Vagina (tissue), 2 donors: ENCODE measurements at regions of chr5 and their contacts with region 1.

Region 1: GRCh38 chr5:140639148-140639979 is at the start of gene TMCO6:
- DNase-seq: peak in 1 of 2 donors; percentile 94
- H3K4me3 ChIP-seq: peak within 1 kb of the TSS; percentile 62 to 85
- H3K27ac ChIP-seq: peak within 1 kb of the TSS; percentile 88
- H3K4me1 ChIP-seq: peaks cover 26% of the 10 kb centered on the region
- H3K27me3 ChIP-seq: no peaks in the 10 kb centered on the region
- CTCF ChIP-seq: peak in 2 of 3 experiments; percentile 21 to 33
- POLR2A ChIP-seq: peak in 1 of 2 donors; percentile 36
- total RNA-seq, gene TMCO6: 16.5 TPM

Region 2: DNA sequence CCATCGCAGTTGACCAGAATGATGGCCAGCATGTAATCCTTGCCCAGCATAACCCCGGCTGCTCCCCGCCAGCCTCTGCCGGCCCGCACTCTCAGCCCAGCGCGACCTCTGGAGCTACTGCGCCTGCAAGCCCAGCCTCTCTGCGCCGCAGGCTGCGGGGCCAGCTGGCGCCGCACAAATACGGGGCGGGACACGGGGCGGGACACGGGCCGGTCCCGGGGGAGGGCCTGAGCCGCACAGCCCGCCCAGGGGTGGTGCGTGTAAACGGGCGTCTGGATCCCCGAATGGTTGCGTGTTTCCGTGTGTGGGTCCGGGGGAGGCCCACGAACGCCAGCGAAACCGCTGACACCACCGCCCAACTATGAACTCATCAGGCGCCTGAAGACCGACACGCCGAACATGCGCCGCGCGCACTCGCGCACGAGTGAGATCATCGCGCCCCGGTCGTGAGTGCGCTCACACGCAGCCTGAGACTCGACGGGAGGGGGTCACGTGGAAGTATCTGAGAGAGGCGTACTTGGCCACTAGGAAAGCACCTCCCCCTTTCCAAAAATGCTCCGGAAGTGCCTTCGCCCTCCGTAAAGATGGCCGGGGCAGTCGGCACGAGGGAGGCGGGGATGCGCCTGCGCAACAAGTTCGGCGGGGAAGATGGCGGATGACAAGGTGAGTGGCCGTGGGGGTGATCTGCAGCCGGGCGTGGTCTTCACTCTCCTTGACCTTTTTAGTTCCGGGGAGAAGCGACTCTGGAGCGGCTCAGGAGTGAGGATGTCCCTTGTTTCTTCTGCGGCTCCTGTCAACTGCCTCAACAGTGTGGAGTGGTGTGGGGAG is 75.0 kb before region 1 on chr5 and contains the starts of genes APBB3 and SLC35A4:
- intact Hi-C with region 1: loop called (anchors 10 kb)
- DNase-seq: peak in 1 of 2 donors; percentile 100
- H3K4me3 ChIP-seq: peak within 1 kb of the TSS; percentile 82 to 89
- H3K27ac ChIP-seq: peak within 1 kb of the TSS; percentile 94
- H3K4me1 ChIP-seq: peaks cover 55% of the 10 kb centered on the region
- H3K27me3 ChIP-seq: no peaks in the 10 kb centered on the region
- CTCF ChIP-seq: no peak
- POLR2A ChIP-seq: peak in 1 of 2 donors; percentile 67
- total RNA-seq, gene APBB3: 16.7 TPM
- total RNA-seq, gene SLC35A4: 21.4 TPM

Region 3: DNA sequence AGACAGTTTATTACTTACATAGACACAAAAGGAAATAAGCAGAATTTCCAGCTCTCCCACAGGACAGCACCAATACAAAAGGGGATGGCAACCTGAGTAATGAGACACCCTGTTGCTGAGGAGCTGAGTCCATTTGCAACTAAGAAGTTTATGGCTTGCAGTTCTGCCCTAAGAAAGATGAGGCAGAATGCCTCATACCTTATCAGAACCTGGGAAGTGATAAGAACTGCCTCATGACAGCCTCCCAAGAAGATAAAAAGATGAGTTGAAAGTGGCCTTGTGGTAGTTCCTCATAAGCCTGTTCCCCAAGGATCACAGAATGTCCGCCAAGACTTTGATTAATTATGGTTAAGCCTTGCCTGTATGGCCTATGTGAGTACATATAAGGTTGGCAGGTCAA is 102.6 kb after region 1 on chr5:
- intact Hi-C with region 1: no loop called
- DNase-seq: no peak
- H3K4me3 ChIP-seq: no peak overlapping the region
- H3K27ac ChIP-seq: no peak overlapping the region
- H3K4me1 ChIP-seq: no peaks in the 10 kb centered on the region
- H3K27me3 ChIP-seq: no peaks in the 10 kb centered on the region
- CTCF ChIP-seq: no peak
- POLR2A ChIP-seq: no peak